Common myeloid progenitor, CD34-positive (primary cell): ENCODE measurements at regions of chr2 and their contacts with region 1.

Region 1: DNA sequence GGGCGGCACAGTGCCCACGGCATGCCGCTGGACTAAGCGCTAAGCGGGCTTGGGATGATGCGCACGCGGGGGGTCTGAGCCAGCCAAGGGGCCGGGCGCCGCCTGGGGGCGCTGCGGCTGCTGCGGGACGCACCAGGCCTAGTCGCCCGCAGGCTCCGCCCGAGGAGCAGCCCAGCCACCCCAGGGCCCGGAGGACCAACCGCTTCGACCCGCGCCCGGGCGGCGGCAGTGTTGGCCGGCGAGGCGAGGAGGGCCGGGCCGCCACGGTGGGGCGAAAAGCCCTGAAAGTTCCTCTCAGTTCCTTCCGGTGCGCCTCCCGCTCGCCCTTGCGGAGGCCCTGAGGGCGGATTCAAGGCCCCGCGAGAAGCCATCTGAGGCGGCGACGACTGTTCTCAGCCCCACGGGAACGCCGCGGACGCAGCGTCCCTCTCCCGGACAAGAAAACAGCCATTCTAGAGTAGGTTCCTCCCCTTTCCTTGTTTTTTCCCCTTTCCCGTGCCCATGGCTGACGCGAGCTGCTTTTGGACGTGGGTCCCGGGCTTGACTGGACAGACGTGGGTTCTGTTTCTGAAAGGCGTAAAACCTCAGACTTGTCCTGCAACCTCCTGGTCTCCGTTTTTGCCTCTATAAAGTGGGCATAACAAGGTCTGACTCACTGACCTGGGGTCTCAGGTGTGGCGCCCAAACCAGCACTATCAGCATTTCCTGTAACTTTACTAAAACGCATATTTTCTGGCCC is at the start of gene ANKAR:
- DNase-seq: peak; percentile 94 to 95 (median 94)
- H3K4me3 ChIP-seq: peak within 1 kb of the TSS; percentile 50 to 90 (median 79)
- H3K27ac ChIP-seq: peak within 1 kb of the TSS; percentile 86 to 90
- H3K4me1 ChIP-seq: peaks cover 0 to 17% (median 11%) of the 10 kb centered on the region in 4 experiments
- H3K27me3 ChIP-seq: no peaks in the 10 kb centered on the region

Region 2: GRCh38 chr2:189685540-189686229 is 11.1 kb after region 1 on chr2:
- CTCF ChIA-PET with region 1: interaction called, 123 read pairs
- POLR2A ChIA-PET with region 1: no interaction called
- DNase-seq: peak; percentile 57 to 81 (median 79)
- H3K4me3 ChIP-seq: peak overlapping the region in 2 of 7 experiments; percentile 5 to 16
- H3K27ac ChIP-seq: no peak overlapping the region
- H3K4me1 ChIP-seq: peaks cover 2 to 16% (median 13%) of the 10 kb centered on the region in 4 experiments
- H3K27me3 ChIP-seq: no peaks in the 10 kb centered on the region

Region 3: GRCh38 chr2:189698020-189698887 is 23.7 kb after region 1 on chr2:
- CTCF ChIA-PET with region 1: interaction called, 123 read pairs
- POLR2A ChIA-PET with region 1: no interaction called
- DNase-seq: peak; percentile 68 to 80 (median 77)
- H3K4me3 ChIP-seq: peak overlapping the region in 3 of 7 experiments; percentile 0 to 64 (median 32)
- H3K27ac ChIP-seq: no peak overlapping the region
- H3K4me1 ChIP-seq: peaks cover 0 to 5% (median 0%) of the 10 kb centered on the region in 4 experiments
- H3K27me3 ChIP-seq: no peaks in the 10 kb centered on the region